Activated CD4-positive, alpha-beta T cell treated with anti-CD3 and anti-CD28 coated beads for 36 hours (primary cell): ENCODE measurements at regions of chr17 and their contacts with region 1.

Region 1: DNA sequence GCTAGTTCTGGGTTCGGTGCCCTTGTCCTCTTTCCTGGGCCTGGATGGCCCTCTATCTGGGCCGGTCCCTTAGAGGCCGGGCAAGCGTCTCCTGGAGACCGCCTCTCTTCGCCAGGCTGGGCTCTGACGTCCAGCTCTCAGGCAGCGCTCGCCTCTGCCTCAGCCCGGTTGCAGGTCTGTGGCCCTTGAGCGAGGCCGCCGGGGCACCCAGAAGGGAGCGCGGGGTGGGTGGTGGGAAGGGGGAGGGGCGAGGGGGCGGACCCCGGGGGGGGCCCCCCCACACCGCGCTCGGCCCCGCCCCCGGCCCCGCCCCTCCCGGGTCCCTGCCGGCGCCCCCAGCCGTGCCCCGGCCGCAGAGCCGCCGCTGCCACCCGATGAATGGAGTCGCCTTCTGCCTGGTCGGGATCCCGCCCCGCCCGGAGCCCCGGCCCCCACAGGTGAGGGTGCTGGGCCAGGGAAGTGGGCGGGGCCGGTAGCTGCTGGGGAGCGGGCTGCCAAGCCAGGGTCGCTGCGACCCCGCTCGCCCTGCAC is at the start of gene ARHGAP23:
- DNase-seq: peak; percentile 59
- ATAC-seq: peak; percentile 45
- H3K4me3 Mint-ChIP-seq: peak within 1 kb of the TSS; percentile 69
- H3K27ac Mint-ChIP-seq: no peak within 1 kb of the TSS
- H3K4me1 Mint-ChIP-seq: peaks cover 9% of the 10 kb centered on the region
- H3K27me3 Mint-ChIP-seq: peaks cover 14% of the 10 kb centered on the region
- total RNA-seq, gene ARHGAP23: 0.55 to 0.86 TPM

Region 2: DNA sequence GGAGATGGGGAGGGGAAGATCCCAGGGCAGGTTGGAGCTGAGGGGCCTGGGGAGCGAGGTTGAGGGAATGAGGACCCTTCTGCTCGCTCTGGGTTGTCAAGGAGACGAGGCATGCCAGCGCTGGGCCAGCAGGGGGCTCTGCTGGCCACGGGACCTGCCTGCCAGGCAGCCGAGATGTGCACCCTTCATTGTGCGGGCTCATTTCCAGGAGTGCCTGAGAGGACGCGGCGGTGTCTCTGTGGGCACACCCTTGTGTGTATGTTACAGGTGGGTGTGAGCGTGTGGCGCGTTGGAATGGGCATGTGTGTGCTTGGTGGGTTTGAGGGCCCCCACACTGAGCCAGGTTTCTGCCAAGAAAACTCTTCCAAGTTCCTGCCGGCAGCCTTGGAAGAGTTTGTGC is 16.0 kb after region 1 on chr17:
- CTCF ChIA-PET with region 1: no interaction called
- POLR2A ChIA-PET with region 1: no interaction called
- intact Hi-C with region 1: loop called in 1 of 2 experiments (anchors 1 kb)
- DNase-seq: peak; percentile 81
- ATAC-seq: peak; percentile 93
- H3K4me3 Mint-ChIP-seq: no peak overlapping the region
- H3K27ac Mint-ChIP-seq: no peak overlapping the region
- H3K4me1 Mint-ChIP-seq: peaks cover 6% of the 10 kb centered on the region
- H3K27me3 Mint-ChIP-seq: peaks cover 3% of the 10 kb centered on the region